ENCODE measurements at regions of chr5 and their contacts with region 1.

Region 1: GRCh38 chr5:151569132-151570046 is 21.7 kb downstream of the FAT2 start:
- DNase-seq: peak; percentile 71
- ATAC-seq: peak; percentile 96
- H3K4me3 Mint-ChIP-seq: no peak overlapping the region
- H3K27ac Mint-ChIP-seq: no peak overlapping the region
- H3K4me1 Mint-ChIP-seq: peaks cover 9% of the 10 kb centered on the region
- H3K27me3 Mint-ChIP-seq: no peaks in the 10 kb centered on the region

Region 2: DNA sequence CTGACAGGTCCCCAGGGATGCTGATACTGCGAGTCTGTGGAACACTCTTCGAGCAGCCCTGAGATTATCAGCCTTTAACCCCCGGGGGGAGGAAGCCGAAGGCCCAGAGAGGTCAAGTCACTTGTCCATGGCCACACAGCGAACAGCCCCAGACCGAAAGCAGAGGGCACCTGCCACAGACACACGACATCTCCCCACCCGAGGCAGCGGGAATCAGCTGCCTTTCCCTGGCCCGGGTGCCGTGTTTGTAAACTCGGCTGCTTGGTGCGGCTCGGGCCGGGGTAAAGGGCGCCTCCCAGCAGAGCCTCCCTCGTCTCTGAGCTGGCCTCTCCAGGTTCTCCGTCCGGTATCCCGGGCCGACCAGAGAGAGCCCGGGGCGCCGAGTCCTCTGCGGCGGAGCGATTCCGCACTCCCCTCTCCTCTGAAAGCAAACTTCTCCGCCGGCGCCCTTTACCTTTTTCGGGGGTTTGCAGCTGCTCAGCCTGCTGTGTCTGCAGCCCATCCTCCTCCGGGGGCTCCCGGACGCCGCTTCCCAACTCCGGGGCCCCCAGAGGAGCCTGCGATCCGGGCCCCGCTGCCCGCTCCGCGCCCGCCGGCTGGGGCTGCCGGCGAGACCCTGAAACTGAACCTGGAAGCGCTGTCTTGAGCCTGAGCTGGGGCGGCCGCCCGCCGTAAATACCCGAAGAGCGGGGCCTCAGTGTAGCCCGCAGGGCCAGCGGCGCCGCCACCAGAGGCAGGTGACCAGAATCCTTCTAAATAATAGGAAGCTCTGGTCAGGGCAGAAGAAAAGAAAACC is 345.7 kb before region 1 on chr5 and contains the start of gene CCDC69:
- CTCF ChIA-PET with region 1: no interaction called
- POLR2A ChIA-PET with region 1: no interaction called
- intact Hi-C with region 1: no loop called
- DNase-seq: peak; percentile 75
- ATAC-seq: peak; percentile 50
- H3K4me3 Mint-ChIP-seq: peak within 1 kb of the TSS; percentile 87
- H3K27ac Mint-ChIP-seq: peak within 1 kb of the TSS; percentile 94
- H3K4me1 Mint-ChIP-seq: peaks cover 57% of the 10 kb centered on the region
- H3K27me3 Mint-ChIP-seq: no peaks in the 10 kb centered on the region
- total RNA-seq, gene CCDC69: 24.8 to 26.9 TPM

Region 3: GRCh38 chr5:151612689-151613427 is 43.5 kb after region 1 on chr5:
- CTCF ChIA-PET with region 1: no interaction called
- POLR2A ChIA-PET with region 1: no interaction called
- intact Hi-C with region 1: loop called (anchors 1 to 5 kb)
- DNase-seq: peak; percentile 80
- ATAC-seq: peak; percentile 83
- H3K4me3 Mint-ChIP-seq: peak overlapping the region; percentile 43
- H3K27ac Mint-ChIP-seq: peak overlapping the region; percentile 83
- H3K4me1 Mint-ChIP-seq: peaks cover 46% of the 10 kb centered on the region
- H3K27me3 Mint-ChIP-seq: no peaks in the 10 kb centered on the region